Activated CD4-positive, alpha-beta memory T cell treated with anti-CD3 and anti-CD28 coated beads, Interleukin-2, amount 10 ng/mL, durations not matched to agents 7 days and 5 days (primary cell): ENCODE measurements at regions of chr2 and their contacts with region 1.

Region 1: GRCh38 chr2:174546581-174547506 is 50.8 kb downstream of the WIPF1 start:
- DNase-seq: peak; percentile 57
- H3K4me3 Mint-ChIP-seq: no peak overlapping the region
- H3K27ac Mint-ChIP-seq: no peak overlapping the region
- H3K4me1 Mint-ChIP-seq: peaks cover 5% of the 10 kb centered on the region
- H3K27me3 Mint-ChIP-seq: no peaks in the 10 kb centered on the region

Region 2: GRCh38 chr2:174487108-174487819 is 59.6 kb before region 1 on chr2:
- CTCF ChIA-PET with region 1: interaction called, 15 read pairs
- POLR2A ChIA-PET with region 1: interaction called, 5 read pairs
- DNase-seq: peak; percentile 99
- H3K4me3 Mint-ChIP-seq: peak overlapping the region; percentile 85
- H3K27ac Mint-ChIP-seq: peak overlapping the region; percentile 57
- H3K4me1 Mint-ChIP-seq: peaks cover 64% of the 10 kb centered on the region
- H3K27me3 Mint-ChIP-seq: no peaks in the 10 kb centered on the region

Region 3: DNA sequence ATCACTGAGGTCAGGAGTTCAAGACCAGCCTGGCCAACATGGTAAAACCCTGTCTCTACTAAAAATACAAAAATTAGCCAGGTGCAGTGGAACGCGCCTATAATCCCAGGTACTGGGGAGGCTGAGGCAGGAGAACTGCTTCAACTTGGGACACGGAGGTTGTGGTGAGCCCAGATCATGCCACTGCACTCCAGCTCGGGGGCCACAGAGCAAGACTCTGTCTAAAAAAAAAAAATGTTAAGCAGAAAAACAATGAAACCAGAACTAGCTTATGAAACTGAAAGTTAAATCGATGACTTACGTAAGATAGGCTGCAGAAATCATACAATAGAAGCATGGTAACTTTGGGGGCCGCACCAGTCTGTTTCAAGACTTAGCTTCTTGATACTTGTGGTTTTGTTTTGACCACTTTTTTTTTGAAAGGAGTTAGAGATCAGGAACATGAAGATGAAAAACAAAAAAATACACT is 53.8 kb before region 1 on chr2:
- CTCF ChIA-PET with region 1: interaction called, 15 read pairs
- POLR2A ChIA-PET with region 1: interaction called, 4 read pairs
- DNase-seq: peak; percentile 69
- H3K4me3 Mint-ChIP-seq: peak overlapping the region; percentile 69
- H3K27ac Mint-ChIP-seq: peak overlapping the region; percentile 97
- H3K4me1 Mint-ChIP-seq: peaks cover 61% of the 10 kb centered on the region
- H3K27me3 Mint-ChIP-seq: no peaks in the 10 kb centered on the region

Region 4: GRCh38 chr2:174510583-174511189 is 36.2 kb before region 1 on chr2:
- CTCF ChIA-PET with region 1: no interaction called
- POLR2A ChIA-PET with region 1: no interaction called
- DNase-seq: no peak
- H3K4me3 Mint-ChIP-seq: no peak overlapping the region
- H3K27ac Mint-ChIP-seq: no peak overlapping the region
- H3K4me1 Mint-ChIP-seq: peaks cover 3% of the 10 kb centered on the region
- H3K27me3 Mint-ChIP-seq: no peaks in the 10 kb centered on the region